HEK293 (cell line): ENCODE measurements at regions of chr11 and their contacts with region 1.

Region 1: GRCh38 chr11:47213985-47214564 is 699 bp upstream of the DDB2 start:
- H3K4me3 ChIP-seq: peak overlapping the region; percentile 46
- H3K27ac ChIP-seq: peak overlapping the region; percentile 74
- H3K4me1 ChIP-seq: peaks cover 3% of the 10 kb centered on the region; the same call in 1 of the 2 replicates
- CTCF ChIP-seq: no peak

Region 2: GRCh38 chr11:47176328-47177228 is 37.5 kb before region 1 on chr11 and contains the start of gene ARFGAP2:
- CTCF ChIA-PET with region 1: interaction called, 5 read pairs
- POLR2A ChIA-PET with region 1: interaction called, 45 read pairs
- H3K4me3 ChIP-seq: peak within 1 kb of the TSS; percentile 97
- H3K27ac ChIP-seq: peak within 1 kb of the TSS; percentile 70
- H3K4me1 ChIP-seq: no peaks in the 10 kb centered on the region
- CTCF ChIP-seq: no peak; the same call in 1 of the 2 replicates

Region 3: DNA sequence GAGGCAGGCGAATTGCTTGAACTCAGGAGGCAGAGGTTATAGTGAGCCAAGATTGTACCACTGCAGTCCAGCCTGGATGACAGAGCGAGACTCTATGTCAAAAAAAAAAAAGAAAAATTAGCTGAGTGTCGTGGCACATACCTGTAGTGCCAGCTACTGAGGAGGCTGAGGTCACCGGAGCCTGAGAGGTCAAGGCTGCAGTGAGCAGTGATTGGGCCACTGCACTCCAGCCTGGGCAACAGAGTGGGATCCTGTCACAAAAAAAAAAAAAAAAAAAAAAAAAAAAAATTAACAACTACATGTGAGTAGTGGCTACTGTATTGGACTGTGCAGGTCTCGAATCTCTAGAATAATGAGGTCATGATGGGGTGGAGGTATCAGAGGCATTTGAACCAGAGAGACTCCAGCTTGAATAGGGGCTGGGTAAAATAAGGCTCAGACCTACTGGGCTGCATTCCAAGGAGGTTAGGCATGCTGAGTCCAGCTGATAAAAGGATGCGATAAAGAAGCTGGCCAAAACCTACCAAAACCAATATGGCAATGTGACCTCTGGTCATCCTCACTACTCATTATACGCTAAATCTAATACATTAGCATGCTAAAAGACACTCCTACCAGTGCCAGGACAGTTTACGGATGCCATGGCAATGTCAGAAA is 22.1 kb before region 1 on chr11:
- CTCF ChIA-PET with region 1: interaction called, 3 read pairs
- POLR2A ChIA-PET with region 1: interaction called, 13 read pairs
- H3K4me3 ChIP-seq: no peak overlapping the region
- H3K27ac ChIP-seq: no peak overlapping the region
- H3K4me1 ChIP-seq: peaks cover 9% of the 10 kb centered on the region
- CTCF ChIP-seq: no peak

Region 4: GRCh38 chr11:47241841-47242301 is 27.8 kb after region 1 on chr11:
- CTCF ChIA-PET with region 1: interaction called, 4 read pairs
- POLR2A ChIA-PET with region 1: interaction called, 14 read pairs
- H3K4me3 ChIP-seq: no peak overlapping the region
- H3K27ac ChIP-seq: 0 out of 2 replicates have a peak overlapping the region, but pooled peaks have one; percentile 16
- H3K4me1 ChIP-seq: no peaks in the 10 kb centered on the region
- CTCF ChIP-seq: no peak

Region 5: DNA sequence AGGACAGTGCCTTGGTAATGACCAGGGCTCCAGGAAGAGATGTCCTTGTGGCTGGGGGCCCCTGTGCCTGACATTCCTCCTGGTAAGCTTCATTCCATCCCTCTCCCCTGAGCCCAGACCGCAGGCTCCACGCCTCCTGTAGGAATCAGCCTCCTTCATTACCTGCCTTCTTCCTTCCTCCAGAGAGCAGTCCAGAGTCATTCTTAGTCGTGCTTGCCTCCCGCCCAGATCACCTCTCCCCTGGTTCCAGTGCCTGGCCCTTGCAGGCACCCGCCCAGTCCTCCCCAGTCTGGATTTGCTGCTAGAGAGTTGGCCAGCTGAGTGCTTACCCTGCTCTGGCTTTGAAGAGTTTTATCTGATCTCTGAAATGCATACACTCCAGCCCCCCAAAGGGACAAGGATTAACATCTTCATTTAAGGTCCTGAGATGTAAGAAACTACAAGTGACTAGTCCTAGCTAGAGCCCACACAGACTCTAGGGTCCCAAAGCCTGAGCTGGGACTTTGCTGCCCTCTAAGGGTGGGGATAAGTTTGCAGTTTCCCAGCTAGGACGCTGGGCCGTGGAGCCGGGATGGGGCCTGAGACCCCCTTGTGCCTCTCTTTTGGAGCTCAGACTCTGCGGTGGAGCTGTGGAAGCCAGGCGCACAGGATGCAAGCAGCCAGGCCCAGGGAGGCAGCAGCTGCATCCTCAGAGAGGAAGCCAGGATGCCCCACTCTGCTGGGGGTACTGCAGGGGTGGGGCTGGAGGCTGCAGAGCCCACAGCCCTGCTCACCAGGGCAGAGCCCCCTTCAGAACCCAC is 45.3 kb after region 1 on chr11:
- CTCF ChIA-PET with region 1: interaction called, 10 read pairs
- POLR2A ChIA-PET with region 1: interaction called, 3 read pairs
- H3K4me3 ChIP-seq: no peak overlapping the region
- H3K27ac ChIP-seq: no peak overlapping the region
- H3K4me1 ChIP-seq: 0 out of 2 replicates have a peak, but pooled peaks cover 4% of the 10 kb centered on the region
- CTCF ChIP-seq: no peak